Dorsolateral prefrontal cortex (tissue), 120 donors: ENCODE measurements at regions of chr3 and their contacts with region 1.

Region 1: GRCh38 chr3:50611464-50612233 is at the start of gene CISH:
- DNase-seq: peak; percentile 65 to 85 (median 75)
- H3K4me3 ChIP-seq: peak within 1 kb of the TSS; percentile 48 to 85 (median 69)
- H3K27ac ChIP-seq: peak within 1 kb of the TSS in 27 of 59 donors; percentile 17 to 77 (median 49)
- H3K27me3 ChIP-seq: no peaks in the 10 kb centered on the region
- CTCF ChIP-seq: peak in 33 of 56 donors; percentile 3 to 57 (median 24)
- total RNA-seq, gene CISH: 0.15 to 7.8 (median 1.1) TPM

Region 2: GRCh38 chr3:50192689-50193141 is 418.9 kb before region 1 on chr3:
- intact Hi-C with region 1: no loop called
- DNase-seq: peak in 8 of 10 donors; percentile 59 to 83 (median 78)
- H3K4me3 ChIP-seq: no peak overlapping the region
- H3K27ac ChIP-seq: no peak overlapping the region
- H3K27me3 ChIP-seq: peaks cover 0 to 23% (median 14%) of the 10 kb centered on the region in 45 donors
- CTCF ChIP-seq: peak; percentile 82 to 95 (median 92)

Region 3: GRCh38 chr3:50358911-50359759 is 252.5 kb before region 1 on chr3 and contains the start of gene TMEM115:
- intact Hi-C with region 1: loop called in 1 of 2 experiments (anchors 10 kb)
- DNase-seq: peak; percentile 97 to 100 (median 99)
- H3K4me3 ChIP-seq: peak within 1 kb of the TSS; percentile 62 to 100 (median 96)
- H3K27ac ChIP-seq: peak within 1 kb of the TSS; percentile 40 to 98 (median 88)
- H3K27me3 ChIP-seq: no peaks in the 10 kb centered on the region
- CTCF ChIP-seq: peak in 28 of 56 donors; percentile 6 to 54 (median 25)
- total RNA-seq, gene TMEM115: 19.2 to 33.5 (median 26.4) TPM

Region 4: GRCh38 chr3:50519471-50520089 is 92.1 kb before region 1 on chr3:
- intact Hi-C with region 1: loop called in 1 of 2 experiments (anchors 2 kb)
- DNase-seq: peak in 9 of 10 donors; percentile 41 to 81 (median 58)
- H3K4me3 ChIP-seq: no peak overlapping the region
- H3K27ac ChIP-seq: no peak overlapping the region
- H3K27me3 ChIP-seq: no peaks in the 10 kb centered on the region
- CTCF ChIP-seq: peak; percentile 24 to 88 (median 78)

Region 5: DNA sequence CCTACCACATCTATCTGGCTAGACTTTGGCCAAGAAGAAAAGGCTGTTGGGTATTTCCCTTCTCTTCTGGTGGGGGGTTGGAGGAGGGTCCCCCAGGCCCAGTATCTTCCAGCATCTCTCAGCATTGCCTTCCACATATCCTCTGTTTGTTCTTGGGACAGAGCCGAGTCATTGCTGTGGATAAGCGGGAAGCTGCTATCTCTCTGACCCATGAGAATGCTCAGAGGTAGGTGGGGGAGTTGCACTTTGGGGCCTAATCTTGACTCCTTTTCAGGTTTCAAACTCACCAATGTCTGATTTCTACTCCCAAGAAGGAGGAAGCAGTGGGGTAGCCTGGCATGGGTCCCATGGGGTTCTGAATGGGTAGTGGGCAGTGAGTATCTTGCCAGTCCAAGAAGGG is 34.3 kb before region 1 on chr3:
- intact Hi-C with region 1: no loop called
- DNase-seq: no peak
- H3K4me3 ChIP-seq: no peak overlapping the region
- H3K27ac ChIP-seq: no peak overlapping the region
- H3K27me3 ChIP-seq: no peaks in the 10 kb centered on the region
- CTCF ChIP-seq: no peak

Region 6: GRCh38 chr3:50660386-50660785 is 48.7 kb after region 1 on chr3:
- intact Hi-C with region 1: no loop called
- DNase-seq: peak in 3 of 10 donors; percentile 3 to 22 (median 12)
- H3K4me3 ChIP-seq: no peak overlapping the region
- H3K27ac ChIP-seq: no peak overlapping the region
- H3K27me3 ChIP-seq: no peaks in the 10 kb centered on the region
- CTCF ChIP-seq: no peak

Region 7: DNA sequence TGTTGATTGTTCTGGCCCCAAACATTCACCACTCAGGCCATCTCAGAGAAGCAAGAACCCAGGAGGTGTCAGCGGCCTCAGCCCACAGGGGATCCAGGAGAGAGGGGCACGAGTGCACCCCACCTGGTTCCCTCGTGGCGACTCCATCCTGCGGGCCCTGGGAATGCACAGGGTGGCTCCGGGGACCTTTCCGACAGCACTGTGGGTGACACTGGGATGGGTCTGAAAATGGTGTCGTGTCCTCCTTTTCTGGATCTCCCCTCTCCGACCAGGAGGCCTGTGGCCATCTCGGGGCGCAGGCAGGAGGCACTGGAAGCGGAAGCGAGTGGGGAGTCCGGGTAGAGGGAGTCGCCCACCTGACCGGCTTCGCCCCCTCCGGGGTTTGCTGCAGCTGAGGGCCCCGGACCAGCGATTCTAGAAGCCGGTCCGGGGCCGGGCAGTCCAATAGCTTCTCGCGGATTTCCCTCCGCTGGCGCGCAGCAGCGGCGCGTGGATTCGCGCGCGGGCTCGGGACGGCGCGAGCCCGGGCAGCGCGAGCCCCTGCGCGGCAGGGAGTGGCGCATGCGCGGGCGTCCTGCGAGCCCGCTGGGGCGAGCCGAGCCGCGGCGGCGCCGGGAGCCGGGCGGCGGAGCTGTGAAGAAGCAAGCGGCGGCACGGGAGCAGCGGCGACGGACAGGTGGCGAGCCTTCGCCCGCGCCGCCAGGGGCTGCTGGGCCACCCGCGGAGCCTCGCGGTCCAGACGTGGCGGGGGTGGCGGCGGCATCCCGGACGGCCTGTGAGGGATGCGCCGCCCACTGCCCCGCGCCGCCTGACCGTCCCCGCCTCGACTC is 62.9 kb after region 1 on chr3 and contains the start of gene DOCK3:
- intact Hi-C with region 1: loop called (anchors 1 to 2 kb)
- DNase-seq: peak in 8 of 10 donors; percentile 16 to 81 (median 50)
- H3K4me3 ChIP-seq: peak within 1 kb of the TSS; percentile 44 to 81 (median 69)
- H3K27ac ChIP-seq: peak within 1 kb of the TSS in 56 of 59 donors; percentile 21 to 90 (median 74)
- H3K27me3 ChIP-seq: no peaks in the 10 kb centered on the region
- CTCF ChIP-seq: peak in 1 of 56 donors; percentile 15
- total RNA-seq, gene DOCK3: 58.3 to 141 (median 105) TPM

Region 8: GRCh38 chr3:51384726-51385473 is 773.3 kb after region 1 on chr3 and contains the start of gene MANF:
- intact Hi-C with region 1: loop called (anchors 2 kb)
- DNase-seq: peak; percentile 92 to 99 (median 98)
- H3K4me3 ChIP-seq: peak within 1 kb of the TSS; percentile 65 to 99 (median 93)
- H3K27ac ChIP-seq: peak within 1 kb of the TSS; percentile 34 to 98 (median 94)
- H3K27me3 ChIP-seq: no peaks in the 10 kb centered on the region
- CTCF ChIP-seq: peak in 35 of 56 donors; percentile 9 to 59 (median 37)
- total RNA-seq, gene MANF: 12.0 to 80.8 (median 29.0) TPM

Region 9: DNA sequence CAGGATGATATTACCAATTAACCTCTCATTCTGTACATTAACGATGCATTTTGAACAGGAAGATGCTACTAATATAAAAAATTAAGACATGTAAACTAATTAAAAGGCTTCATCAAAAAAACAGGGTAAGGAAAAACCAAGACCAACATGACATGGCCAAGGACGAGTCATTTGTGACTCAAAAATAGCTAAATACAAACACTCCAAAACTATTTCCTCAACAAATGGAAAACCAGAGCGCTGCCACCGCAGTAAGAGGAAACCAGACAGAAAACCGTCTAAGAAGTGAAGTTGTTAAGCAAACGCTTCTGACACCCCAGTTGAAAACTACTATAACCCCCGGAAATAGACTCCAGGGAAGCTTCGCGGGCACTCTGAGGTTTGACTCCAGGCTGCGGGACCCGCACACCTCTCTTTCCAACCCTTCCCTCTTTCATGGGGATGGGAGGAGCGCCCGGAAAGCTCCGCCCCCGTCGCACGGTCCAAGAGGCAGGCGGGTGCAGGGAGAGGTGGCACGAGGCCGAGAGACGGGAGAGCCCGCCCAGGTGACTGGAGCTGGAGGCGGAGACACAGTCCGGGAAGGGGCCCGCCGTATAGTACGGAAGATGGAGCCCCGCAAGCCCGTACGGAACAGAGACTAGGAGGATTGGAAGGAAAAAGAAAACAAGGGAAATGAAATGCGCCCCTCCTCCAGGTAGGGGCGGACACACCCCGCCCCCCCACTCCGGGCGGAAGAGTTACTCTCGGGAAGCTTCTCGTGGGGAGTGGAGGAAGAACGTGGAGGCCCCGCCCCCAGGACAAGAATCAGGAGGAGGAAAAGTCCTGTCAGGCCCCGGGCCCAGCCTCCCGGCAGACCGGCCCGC is 887.5 kb after region 1 on chr3:
- intact Hi-C with region 1: loop called in 1 of 2 experiments (anchors 2 kb)
- DNase-seq: peak; percentile 57 to 89 (median 82)
- H3K4me3 ChIP-seq: peak overlapping the region; percentile 65 to 97 (median 87)
- H3K27ac ChIP-seq: peak overlapping the region; percentile 52 to 97 (median 90)
- H3K27me3 ChIP-seq: no peaks in the 10 kb centered on the region
- CTCF ChIP-seq: peak in 3 of 56 donors; percentile 7 to 16 (median 13)